ENCODE measurements at regions of chr16 and their contacts with region 1.

Region 1: GRCh38 chr16:29961479-29962343 is at the start of gene TMEM219:
- DNase-seq: peak; percentile 90 to 99 (median 96)
- ATAC-seq: peak; percentile 94
- H3K4me3 ChIP-seq: peak within 1 kb of the TSS; percentile 91
- H3K4me3 Mint-ChIP-seq: peak within 1 kb of the TSS; percentile 88 to 94 (median 92)
- H3K27ac ChIP-seq: peak within 1 kb of the TSS; percentile 85
- H3K27ac Mint-ChIP-seq: peak within 1 kb of the TSS; percentile 88 to 97 (median 95)
- H3K4me1 ChIP-seq: peaks cover 10 to 17% of the 10 kb centered on the region in 2 donors
- H3K4me1 Mint-ChIP-seq: peaks cover 8 to 31% (median 23%) of the 10 kb centered on the region in 7 donors
- H3K27me3 ChIP-seq: no peaks in the 10 kb centered on the region
- H3K27me3 Mint-ChIP-seq: no peaks in the 10 kb centered on the region
- total RNA-seq, gene TMEM219: 64.3 to 89.7 (median 74.0) TPM

Region 2: GRCh38 chr16:29815793-29816693 is 145.7 kb before region 1 on chr16 and contains the start of gene PAGR1:
- CTCF ChIA-PET with region 1: interaction called, 3 read pairs
- POLR2A ChIA-PET with region 1: interaction called, 3 read pairs
- intact Hi-C with region 1: loop called in 1 of 2 experiments (anchors 2 kb)
- DNase-seq: peak; percentile 92 to 99 (median 99)
- ATAC-seq: peak; percentile 87
- H3K4me3 ChIP-seq: peak within 1 kb of the TSS; percentile 99
- H3K4me3 Mint-ChIP-seq: peak within 1 kb of the TSS; percentile 85 to 100 (median 96)
- H3K27ac ChIP-seq: peak within 1 kb of the TSS; percentile 92
- H3K27ac Mint-ChIP-seq: peak within 1 kb of the TSS; percentile 95 to 99 (median 99)
- H3K4me1 ChIP-seq: peaks cover 29 to 41% of the 10 kb centered on the region in 2 donors
- H3K4me1 Mint-ChIP-seq: peaks cover 40 to 75% (median 59%) of the 10 kb centered on the region in 7 donors
- H3K27me3 ChIP-seq: no peaks in the 10 kb centered on the region
- H3K27me3 Mint-ChIP-seq: peaks cover 0 to 22% (median 0%) of the 10 kb centered on the region in 5 donors
- total RNA-seq, gene PAGR1: 17.5 to 42.0 (median 25.7) TPM

Region 3: GRCh38 chr16:29973384-29974246 is 11.9 kb after region 1 on chr16 and contains the start of gene TAOK2:
- CTCF ChIA-PET with region 1: interaction called, 3 read pairs
- POLR2A ChIA-PET with region 1: interaction called, 79 read pairs
- intact Hi-C with region 1: loop called (anchors 1 kb)
- DNase-seq: peak; percentile 83 to 98 (median 89)
- ATAC-seq: peak; percentile 97
- H3K4me3 ChIP-seq: peak within 1 kb of the TSS; percentile 98
- H3K4me3 Mint-ChIP-seq: peak within 1 kb of the TSS; percentile 80 to 97 (median 94)
- H3K27ac ChIP-seq: peak within 1 kb of the TSS; percentile 78
- H3K27ac Mint-ChIP-seq: peak within 1 kb of the TSS; percentile 77 to 93 (median 91)
- H3K4me1 ChIP-seq: peaks cover 20 to 23% of the 10 kb centered on the region in 2 donors
- H3K4me1 Mint-ChIP-seq: peaks cover 23 to 39% (median 37%) of the 10 kb centered on the region in 7 donors
- H3K27me3 ChIP-seq: no peaks in the 10 kb centered on the region
- H3K27me3 Mint-ChIP-seq: no peaks in the 10 kb centered on the region
- total RNA-seq, gene TAOK2: 19.4 to 48.5 (median 42.9) TPM

Region 4: GRCh38 chr16:30005341-30006094 is 43.8 kb after region 1 on chr16:
- CTCF ChIA-PET with region 1: no interaction called
- POLR2A ChIA-PET with region 1: no interaction called
- intact Hi-C with region 1: no loop called
- DNase-seq: peak in 7 of 9 donors; percentile 30 to 48 (median 43)
- ATAC-seq: peak; percentile 76
- H3K4me3 ChIP-seq: no peak overlapping the region
- H3K4me3 Mint-ChIP-seq: no peak overlapping the region
- H3K27ac ChIP-seq: no peak overlapping the region
- H3K27ac Mint-ChIP-seq: peak overlapping the region in 1 of 9 donors; percentile 48
- H3K4me1 ChIP-seq: peaks cover 4 to 6% of the 10 kb centered on the region in 2 donors
- H3K4me1 Mint-ChIP-seq: peaks cover 0 to 9% (median 4%) of the 10 kb centered on the region in 7 donors
- H3K27me3 ChIP-seq: peaks cover 0 to 4% of the 10 kb centered on the region in 2 donors
- H3K27me3 Mint-ChIP-seq: peaks cover 0 to 19% (median 0%) of the 10 kb centered on the region in 5 donors